Activated naive CD4-positive, alpha-beta T cell treated with anti-CD3 and anti-CD28 coated beads for 36 hours (primary cell): ENCODE measurements at regions of chr17 and their contacts with region 1.

Region 1: DNA sequence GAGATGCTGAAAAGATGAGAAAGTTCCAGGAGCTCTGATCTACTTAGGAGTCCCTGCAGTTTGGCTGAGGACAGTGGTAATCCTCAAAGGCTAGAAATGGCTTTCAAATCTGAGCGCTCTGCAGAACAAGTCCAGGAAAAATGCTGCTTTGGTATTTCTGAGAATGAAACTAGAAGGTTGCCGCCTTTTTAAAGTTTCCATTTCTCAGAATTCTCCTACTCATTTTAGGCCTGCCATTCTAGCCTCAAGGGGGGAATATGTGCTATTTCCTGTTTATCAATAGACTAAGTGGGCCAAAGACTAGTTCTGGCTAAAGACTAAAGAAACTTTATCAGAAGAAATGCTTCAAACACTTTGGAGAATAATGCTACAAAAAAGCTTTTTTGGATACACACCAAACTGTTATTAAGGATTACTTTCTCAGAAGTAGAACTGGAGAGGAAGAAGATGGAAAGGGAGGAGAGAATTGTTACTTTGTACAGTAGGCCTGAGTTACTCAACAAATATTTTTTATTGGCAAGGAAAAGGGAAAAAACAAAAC is at the start of gene SLFN12L:
- DNase-seq: peak; percentile 54
- H3K4me3 Mint-ChIP-seq: peak within 1 kb of the TSS; percentile 92
- H3K27ac Mint-ChIP-seq: peak within 1 kb of the TSS; percentile 98
- H3K4me1 Mint-ChIP-seq: peaks cover 47% of the 10 kb centered on the region
- H3K27me3 Mint-ChIP-seq: no peaks in the 10 kb centered on the region
- total RNA-seq, gene SLFN12L: 23.5 to 25.2 TPM

Region 2: DNA sequence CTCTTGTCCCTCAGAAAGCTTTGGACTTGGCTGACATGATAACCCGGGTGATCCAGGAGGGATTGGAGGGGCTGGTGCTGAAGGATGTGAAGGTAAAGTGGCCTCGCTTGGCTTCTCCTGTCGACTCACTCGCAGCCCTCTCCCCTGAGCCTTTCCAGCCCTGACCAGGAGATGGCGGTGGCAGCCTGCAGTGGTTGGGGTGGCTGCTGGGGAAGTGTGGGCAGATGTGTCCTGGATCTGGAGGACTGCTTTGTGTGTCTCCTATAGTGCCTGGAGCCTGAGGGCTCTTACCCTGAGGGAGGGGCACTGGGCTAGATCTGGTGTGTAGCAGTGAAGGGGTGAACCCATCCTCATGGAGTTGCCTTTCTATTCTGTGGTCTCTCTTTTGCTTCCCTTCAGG is 539.5 kb before region 1 on chr17:
- CTCF ChIA-PET with region 1: no interaction called
- intact Hi-C with region 1: loop called (anchors 10 kb)
- DNase-seq: peak; percentile 88
- H3K4me3 Mint-ChIP-seq: no peak overlapping the region
- H3K27ac Mint-ChIP-seq: peak overlapping the region; percentile 83
- H3K4me1 Mint-ChIP-seq: peaks cover 6% of the 10 kb centered on the region
- H3K27me3 Mint-ChIP-seq: no peaks in the 10 kb centered on the region

Region 3: DNA sequence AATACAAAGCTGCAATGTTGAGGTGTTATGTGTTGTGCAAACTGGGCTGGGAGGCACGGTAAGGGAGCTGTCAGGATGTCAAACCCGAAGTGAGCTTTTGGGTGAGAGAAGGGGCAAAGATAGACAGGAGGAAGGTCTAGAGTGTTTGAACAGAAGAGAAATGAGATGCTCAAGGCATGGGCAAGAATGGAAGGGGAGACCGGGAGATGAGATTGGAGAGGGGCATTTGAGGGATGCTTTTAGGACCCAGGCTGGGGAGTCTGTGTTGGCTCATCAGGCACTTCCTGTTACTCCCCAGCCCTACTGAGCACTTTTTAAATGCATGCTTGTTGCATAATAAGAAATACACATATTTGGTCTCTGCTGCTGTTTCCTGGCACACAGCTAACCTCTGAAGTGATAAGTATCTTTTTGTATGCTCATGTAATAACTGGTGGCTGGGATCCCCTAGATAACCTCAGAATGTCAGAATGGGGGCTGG is 376.4 kb before region 1 on chr17:
- CTCF ChIA-PET with region 1: no interaction called
- intact Hi-C with region 1: loop called (anchors 1 kb)
- DNase-seq: peak; percentile 35
- H3K4me3 Mint-ChIP-seq: peak overlapping the region; percentile 47
- H3K27ac Mint-ChIP-seq: peak overlapping the region; percentile 73
- H3K4me1 Mint-ChIP-seq: peaks cover 50% of the 10 kb centered on the region
- H3K27me3 Mint-ChIP-seq: no peaks in the 10 kb centered on the region

Region 4: GRCh38 chr17:35312790-35313711 is 224.6 kb before region 1 on chr17:
- CTCF ChIA-PET with region 1: interaction called, 118 read pairs
- intact Hi-C with region 1: loop called (anchors 1 kb)
- DNase-seq: peak; percentile 78
- H3K4me3 Mint-ChIP-seq: peak overlapping the region; percentile 77
- H3K27ac Mint-ChIP-seq: peak overlapping the region; percentile 85
- H3K4me1 Mint-ChIP-seq: peaks cover 27% of the 10 kb centered on the region
- H3K27me3 Mint-ChIP-seq: no peaks in the 10 kb centered on the region

Region 5: GRCh38 chr17:35448214-35448898 is 89.3 kb before region 1 on chr17 and contains the start of gene SLFN13:
- CTCF ChIA-PET with region 1: interaction called, 3 read pairs
- intact Hi-C with region 1: loop called (anchors 1 kb)
- DNase-seq: peak; percentile 98
- H3K4me3 Mint-ChIP-seq: peak within 1 kb of the TSS; percentile 52
- H3K27ac Mint-ChIP-seq: peak within 1 kb of the TSS; percentile 13
- H3K4me1 Mint-ChIP-seq: peaks cover 12% of the 10 kb centered on the region
- H3K27me3 Mint-ChIP-seq: no peaks in the 10 kb centered on the region
- total RNA-seq, gene SLFN13: 28.6 to 30.1 TPM

Region 6: GRCh38 chr17:35587074-35587971 is 49.7 kb after region 1 on chr17 and contains the start of gene AP2B1:
- CTCF ChIA-PET with region 1: interaction called, 4 read pairs
- intact Hi-C with region 1: loop called (anchors 1 kb)
- DNase-seq: peak; percentile 97
- H3K4me3 Mint-ChIP-seq: peak within 1 kb of the TSS; percentile 97
- H3K27ac Mint-ChIP-seq: peak within 1 kb of the TSS; percentile 97
- H3K4me1 Mint-ChIP-seq: peaks cover 29% of the 10 kb centered on the region
- H3K27me3 Mint-ChIP-seq: no peaks in the 10 kb centered on the region
- total RNA-seq, gene AP2B1: 158 to 172 TPM

Region 7: GRCh38 chr17:35660902-35661301 is 123.2 kb after region 1 on chr17:
- CTCF ChIA-PET with region 1: no interaction called
- intact Hi-C with region 1: no loop called
- DNase-seq: no peak
- H3K4me3 Mint-ChIP-seq: no peak overlapping the region
- H3K27ac Mint-ChIP-seq: no peak overlapping the region
- H3K4me1 Mint-ChIP-seq: no peaks in the 10 kb centered on the region
- H3K27me3 Mint-ChIP-seq: no peaks in the 10 kb centered on the region